Tibial artery (tissue), 4 donors: ENCODE measurements at regions of chr2 and their contacts with region 1.

Region 1: GRCh38 chr2:135004005-135004746 is 43.1 kb downstream of the MAP3K19 start:
- DNase-seq: peak; percentile 41 to 74
- H3K4me3 ChIP-seq: no peak overlapping the region
- H3K27ac ChIP-seq: no peak overlapping the region
- H3K4me1 ChIP-seq: peaks cover 0 to 5% (median 0%) of the 10 kb centered on the region in 4 donors
- H3K27me3 ChIP-seq: peaks cover 0 to 13% of the 10 kb centered on the region in 2 donors
- CTCF ChIP-seq: peak; percentile 81 to 86

Region 2: GRCh38 chr2:135600915-135601314 is 596.7 kb after region 1 on chr2:
- intact Hi-C with region 1: loop called (anchors 10 kb)
- DNase-seq: no peak
- H3K4me3 ChIP-seq: no peak overlapping the region
- H3K27ac ChIP-seq: no peak overlapping the region
- H3K4me1 ChIP-seq: peaks cover 0 to 9% (median 1%) of the 10 kb centered on the region in 4 donors
- H3K27me3 ChIP-seq: no peaks in the 10 kb centered on the region
- CTCF ChIP-seq: peak in 1 of 2 experiments; percentile 13

Region 3: DNA sequence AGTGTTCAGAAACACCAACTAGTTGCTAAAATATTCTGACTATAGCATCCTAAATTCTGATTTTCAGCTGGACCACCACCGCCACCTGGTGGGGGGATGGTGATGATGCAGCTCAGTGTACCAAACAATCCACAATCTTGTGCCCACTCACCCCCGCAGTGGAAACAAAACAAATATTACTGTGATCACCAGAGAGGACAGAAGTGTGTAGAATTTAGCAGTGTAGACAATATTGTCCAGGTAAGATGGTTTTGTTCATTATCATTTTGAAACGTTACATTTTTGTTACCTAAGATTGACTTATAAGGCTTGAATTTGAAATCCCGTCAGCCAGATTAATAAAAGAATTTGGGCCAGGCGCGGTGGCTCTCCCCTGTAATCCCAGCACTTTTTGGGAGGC is 705.8 kb after region 1 on chr2:
- intact Hi-C with region 1: loop called (anchors 5 kb)
- DNase-seq: peak; percentile 42 to 75
- H3K4me3 ChIP-seq: no peak overlapping the region
- H3K27ac ChIP-seq: no peak overlapping the region
- H3K4me1 ChIP-seq: no peaks in the 10 kb centered on the region
- H3K27me3 ChIP-seq: no peaks in the 10 kb centered on the region
- CTCF ChIP-seq: peak; percentile 83 to 93